Heart left ventricle (tissue), 16 donors: ENCODE measurements at regions of chr15 and their contacts with region 1.

Region 1: GRCh38 chr15:65610871-65611718 is at the start of gene INTS14:
- DNase-seq: peak; percentile 97 to 99 (median 98)
- ATAC-seq: peak; percentile 99 to 100 (median 99)
- H3K4me3 ChIP-seq: peak within 1 kb of the TSS; percentile 49 to 98 (median 86)
- H3K27ac ChIP-seq: peak within 1 kb of the TSS; percentile 87 to 98 (median 94)
- H3K4me1 ChIP-seq: peaks cover 3 to 28% (median 20%) of the 10 kb centered on the region in 12 donors
- H3K27me3 ChIP-seq: no peaks in the 10 kb centered on the region
- CTCF ChIP-seq: peak; percentile 56 to 83 (median 76)
- POLR2A ChIP-seq: peak in 1 of 2 donors; percentile 71
- total RNA-seq, gene INTS14: 11.2 to 19.3 (median 15.8) TPM

Region 2: GRCh38 chr15:65516997-65517865 is 93.9 kb before region 1 on chr15 and contains the start of gene DPP8:
- intact Hi-C with region 1: loop called in 1 of 10 experiments (anchors 1 kb)
- DNase-seq: peak; percentile 93 to 96 (median 94)
- ATAC-seq: peak; percentile 94 to 99 (median 98)
- H3K4me3 ChIP-seq: peak within 1 kb of the TSS; percentile 83 to 100 (median 97)
- H3K27ac ChIP-seq: peak within 1 kb of the TSS; percentile 85 to 99 (median 94)
- H3K4me1 ChIP-seq: peaks cover 8 to 46% (median 35%) of the 10 kb centered on the region in 12 donors
- H3K27me3 ChIP-seq: no peaks in the 10 kb centered on the region
- CTCF ChIP-seq: peak; percentile 68 to 98 (median 88)
- POLR2A ChIP-seq: peak in 1 of 2 donors; percentile 54
- total RNA-seq, gene DPP8: 34.9 to 44.5 (median 39.5) TPM

Region 3: DNA sequence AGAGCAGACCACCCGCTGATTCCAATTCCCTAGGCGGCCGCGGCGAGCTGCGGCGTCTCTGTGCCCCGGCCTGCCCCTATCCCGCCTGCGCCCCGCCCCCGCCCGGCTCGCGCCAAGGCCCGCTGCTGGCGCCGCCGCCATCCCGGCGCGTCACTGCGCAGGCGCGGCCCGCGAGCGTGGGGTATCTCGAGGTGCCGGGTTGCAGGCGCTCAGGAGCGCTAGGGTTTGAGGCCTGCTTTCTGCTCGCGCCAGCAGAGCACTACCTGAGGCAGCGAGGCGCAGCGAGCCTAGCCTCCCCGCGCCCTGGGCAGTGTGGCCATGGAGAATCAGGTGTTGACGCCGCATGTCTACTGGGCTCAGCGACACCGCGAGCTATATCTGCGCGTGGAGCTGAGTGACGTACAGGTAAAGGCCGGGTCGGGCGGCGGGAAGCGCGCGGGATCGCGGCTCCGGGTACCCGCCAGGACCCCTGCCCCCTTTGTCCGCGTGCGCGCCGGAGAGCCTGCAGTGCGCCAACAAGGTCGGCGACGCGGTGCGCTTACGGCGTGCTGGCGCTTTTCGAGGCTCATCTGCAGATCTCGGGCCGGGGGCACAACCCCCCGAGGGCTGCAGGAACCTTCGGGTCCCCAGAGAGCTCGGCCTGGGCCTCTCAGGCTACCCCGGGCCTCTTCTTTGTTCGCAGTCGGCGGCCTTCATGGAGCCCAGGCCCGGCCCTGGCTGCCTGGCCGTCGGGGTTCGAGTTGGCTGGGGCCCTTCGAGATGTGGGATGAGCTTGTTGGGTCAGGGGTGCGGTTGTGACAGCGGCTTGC is 80.6 kb before region 1 on chr15 and contains the start of gene HACD3:
- intact Hi-C with region 1: loop called in 1 of 10 experiments (anchors 2 kb)
- DNase-seq: peak; percentile 87 to 94 (median 90)
- ATAC-seq: peak; percentile 83 to 99 (median 96)
- H3K4me3 ChIP-seq: peak within 1 kb of the TSS; percentile 54 to 97 (median 83)
- H3K27ac ChIP-seq: peak within 1 kb of the TSS in 11 of 12 donors; percentile 7 to 81 (median 75)
- H3K4me1 ChIP-seq: peaks cover 0 to 31% (median 14%) of the 10 kb centered on the region in 12 donors
- H3K27me3 ChIP-seq: no peaks in the 10 kb centered on the region
- CTCF ChIP-seq: no peak
- POLR2A ChIP-seq: peak in 1 of 2 donors; percentile 37
- total RNA-seq, gene HACD3: 6.2 to 16.7 (median 9.8) TPM

Region 4: DNA sequence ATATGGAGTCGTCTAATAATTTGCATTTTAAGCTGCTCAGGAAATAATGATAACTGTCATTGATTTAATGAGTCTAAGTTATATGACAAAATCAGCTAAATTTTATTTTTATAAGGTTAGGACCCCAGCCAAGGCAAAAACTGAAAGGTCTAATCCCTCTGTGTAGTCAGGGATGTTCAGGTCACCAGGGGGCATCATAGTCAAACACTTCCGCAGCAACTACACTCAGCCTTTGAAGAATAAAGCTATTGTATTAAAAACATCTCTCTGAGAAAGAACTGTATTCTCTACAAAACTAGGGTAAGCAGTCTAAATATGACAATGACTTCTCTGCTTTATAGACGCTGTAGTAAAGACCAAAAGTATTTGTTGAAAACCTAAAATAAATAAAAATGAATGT is 15.1 kb before region 1 on chr15:
- intact Hi-C with region 1: no loop called
- DNase-seq: no peak
- ATAC-seq: no peak
- H3K4me3 ChIP-seq: no peak overlapping the region
- H3K27ac ChIP-seq: no peak overlapping the region
- H3K4me1 ChIP-seq: peaks cover 0 to 6% (median 0%) of the 10 kb centered on the region in 12 donors
- H3K27me3 ChIP-seq: no peaks in the 10 kb centered on the region
- CTCF ChIP-seq: peak in 3 of 12 donors; percentile 15 to 26 (median 21)
- POLR2A ChIP-seq: no peak

Region 5: DNA sequence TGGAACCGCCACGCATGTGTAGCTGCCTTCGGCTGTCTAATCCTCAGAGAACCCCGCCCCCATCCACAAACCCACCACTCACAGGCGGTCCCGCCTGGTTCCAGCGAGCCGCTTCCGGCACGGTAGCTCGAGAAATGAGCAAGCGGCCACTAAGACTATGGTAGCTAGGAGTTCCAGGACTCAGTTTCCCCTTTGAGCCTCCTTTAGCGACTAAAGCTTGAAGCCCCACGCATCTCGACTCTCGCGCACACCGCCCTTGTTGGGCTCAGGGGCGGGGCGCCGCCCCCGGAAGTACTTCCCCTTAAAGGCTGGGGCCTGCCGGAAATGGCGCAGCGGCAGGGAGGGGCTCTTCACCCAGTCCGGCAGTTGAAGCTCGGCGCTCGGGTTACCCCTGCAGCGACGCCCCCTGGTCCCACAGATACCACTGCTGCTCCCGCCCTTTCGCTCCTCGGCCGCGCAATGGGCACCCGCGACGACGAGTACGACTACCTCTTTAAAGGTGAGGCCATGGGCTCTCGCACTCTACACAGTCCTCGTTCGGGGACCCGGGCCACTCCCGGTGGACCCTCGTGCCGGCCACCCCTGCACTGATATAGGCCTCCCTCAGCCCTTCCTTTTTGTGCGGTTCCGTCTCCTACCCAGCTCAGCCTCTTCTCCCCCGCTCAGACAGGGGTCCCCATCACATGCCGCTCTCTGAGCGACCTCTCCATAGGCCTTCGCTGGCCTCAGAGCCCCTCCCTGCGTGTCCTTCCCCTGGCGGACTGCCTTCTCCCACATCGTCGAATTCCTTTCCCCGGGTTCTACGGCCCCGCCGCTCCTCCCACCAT is 258.2 kb after region 1 on chr15 and contains the start of gene RAB11A:
- intact Hi-C with region 1: loop called in 1 of 10 experiments (anchors 1 kb)
- DNase-seq: peak; percentile 95 to 98 (median 98)
- ATAC-seq: peak; percentile 98 to 99 (median 99)
- H3K4me3 ChIP-seq: peak within 1 kb of the TSS; percentile 70 to 98 (median 88)
- H3K27ac ChIP-seq: peak within 1 kb of the TSS; percentile 86 to 97 (median 94)
- H3K4me1 ChIP-seq: peaks cover 0 to 38% (median 19%) of the 10 kb centered on the region in 12 donors
- H3K27me3 ChIP-seq: no peaks in the 10 kb centered on the region
- CTCF ChIP-seq: peak in 11 of 12 donors; percentile 6 to 67 (median 43)
- POLR2A ChIP-seq: peak; percentile 47 to 88
- total RNA-seq, gene RAB11A: 149 to 212 (median 162) TPM